PC-3 (cell line): ENCODE measurements at regions of chr1 and their contacts with region 1.

Region 1: GRCh38 chr1:6646499-6647148 is 22.0 kb downstream of the THAP3 start:
- DNase-seq: peak; percentile 68
- ATAC-seq: peak; percentile 53
- H3K4me3 ChIP-seq: no peak overlapping the region
- H3K27ac ChIP-seq: no peak overlapping the region
- H3K4me1 ChIP-seq: no peaks in the 10 kb centered on the region
- H3K27me3 ChIP-seq: no peaks in the 10 kb centered on the region
- CTCF ChIP-seq: peak; percentile 90

Region 2: GRCh38 chr1:6342056-6342455 is 304.6 kb before region 1 on chr1:
- CTCF ChIA-PET with region 1: no interaction called
- POLR2A ChIA-PET with region 1: no interaction called
- intact Hi-C with region 1: no loop called
- DNase-seq: no peak
- ATAC-seq: no peak
- H3K4me3 ChIP-seq: no peak overlapping the region
- H3K27ac ChIP-seq: peak overlapping the region; percentile 67
- H3K4me1 ChIP-seq: peaks cover 16% of the 10 kb centered on the region
- H3K27me3 ChIP-seq: no peaks in the 10 kb centered on the region
- CTCF ChIP-seq: no peak

Region 3: DNA sequence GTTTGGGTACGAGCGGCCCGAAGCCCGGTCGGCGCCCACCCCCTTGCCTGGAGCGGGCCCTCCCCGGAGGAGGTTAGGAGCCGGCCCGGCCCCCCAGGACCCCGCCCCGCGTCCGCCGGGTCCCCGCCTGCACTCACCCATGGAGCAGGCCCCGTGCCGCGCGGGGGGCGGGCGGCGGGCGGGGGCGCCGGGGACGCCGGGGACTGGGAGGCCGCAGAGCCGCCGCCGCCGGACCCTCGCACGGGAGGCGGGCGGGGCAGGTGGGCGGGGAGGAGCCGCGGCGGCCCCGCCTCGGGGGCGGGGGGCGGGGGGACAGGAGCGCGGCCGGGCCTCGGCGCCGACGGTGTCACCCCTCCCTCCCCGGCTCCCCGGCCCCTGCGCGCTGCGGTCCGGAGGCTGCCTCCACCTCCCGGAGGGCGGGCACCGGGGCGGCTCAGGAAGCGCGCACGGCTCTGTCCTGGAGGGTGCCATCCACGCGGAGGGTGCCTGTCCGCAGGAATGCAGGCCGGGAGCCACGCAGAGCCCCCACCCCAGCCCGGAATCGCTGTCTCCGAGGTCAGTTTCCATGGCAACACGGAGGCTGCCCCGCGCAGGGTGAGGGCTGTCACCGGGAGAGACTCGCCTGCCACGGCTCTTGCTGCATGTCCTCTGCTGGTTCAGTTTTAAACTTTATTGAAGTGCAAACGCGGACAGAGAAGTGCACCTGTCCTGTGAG is 149.3 kb before region 1 on chr1:
- CTCF ChIA-PET with region 1: no interaction called
- POLR2A ChIA-PET with region 1: no interaction called
- intact Hi-C with region 1: no loop called
- DNase-seq: peak; percentile 77
- ATAC-seq: peak; percentile 80
- H3K4me3 ChIP-seq: peak overlapping the region; percentile 89
- H3K27ac ChIP-seq: no peak overlapping the region
- H3K4me1 ChIP-seq: peaks cover 27% of the 10 kb centered on the region
- H3K27me3 ChIP-seq: no peaks in the 10 kb centered on the region
- CTCF ChIP-seq: no peak

Region 4: GRCh38 chr1:6554031-6554906 is 92.4 kb before region 1 on chr1 and contains the start of gene NOL9:
- CTCF ChIA-PET with region 1: no interaction called
- POLR2A ChIA-PET with region 1: no interaction called
- intact Hi-C with region 1: loop called (anchors 5 kb)
- DNase-seq: peak; percentile 98
- ATAC-seq: peak; percentile 96
- H3K4me3 ChIP-seq: peak within 1 kb of the TSS; percentile 89
- H3K27ac ChIP-seq: no peak within 1 kb of the TSS
- H3K4me1 ChIP-seq: peaks cover 12% of the 10 kb centered on the region
- H3K27me3 ChIP-seq: no peaks in the 10 kb centered on the region
- CTCF ChIP-seq: peak; percentile 97
- total RNA-seq, gene NOL9: 79.1 and 102 TPM in 2 replicates

Region 5: GRCh38 chr1:6579374-6580118 is 67.1 kb before region 1 on chr1 and contains the start of gene ZBTB48:
- CTCF ChIA-PET with region 1: no interaction called
- POLR2A ChIA-PET with region 1: no interaction called
- intact Hi-C with region 1: loop called (anchors 2 kb)
- DNase-seq: peak; percentile 100
- ATAC-seq: peak; percentile 96
- H3K4me3 ChIP-seq: peak within 1 kb of the TSS; percentile 92
- H3K27ac ChIP-seq: 0 out of 2 replicates have a peak within 1 kb of the TSS, but pooled peaks have one; percentile 11
- H3K4me1 ChIP-seq: peaks cover 27% of the 10 kb centered on the region
- H3K27me3 ChIP-seq: no peaks in the 10 kb centered on the region
- CTCF ChIP-seq: no peak
- total RNA-seq, gene ZBTB48: 42.7 and 47.2 TPM in 2 replicates

Region 6: DNA sequence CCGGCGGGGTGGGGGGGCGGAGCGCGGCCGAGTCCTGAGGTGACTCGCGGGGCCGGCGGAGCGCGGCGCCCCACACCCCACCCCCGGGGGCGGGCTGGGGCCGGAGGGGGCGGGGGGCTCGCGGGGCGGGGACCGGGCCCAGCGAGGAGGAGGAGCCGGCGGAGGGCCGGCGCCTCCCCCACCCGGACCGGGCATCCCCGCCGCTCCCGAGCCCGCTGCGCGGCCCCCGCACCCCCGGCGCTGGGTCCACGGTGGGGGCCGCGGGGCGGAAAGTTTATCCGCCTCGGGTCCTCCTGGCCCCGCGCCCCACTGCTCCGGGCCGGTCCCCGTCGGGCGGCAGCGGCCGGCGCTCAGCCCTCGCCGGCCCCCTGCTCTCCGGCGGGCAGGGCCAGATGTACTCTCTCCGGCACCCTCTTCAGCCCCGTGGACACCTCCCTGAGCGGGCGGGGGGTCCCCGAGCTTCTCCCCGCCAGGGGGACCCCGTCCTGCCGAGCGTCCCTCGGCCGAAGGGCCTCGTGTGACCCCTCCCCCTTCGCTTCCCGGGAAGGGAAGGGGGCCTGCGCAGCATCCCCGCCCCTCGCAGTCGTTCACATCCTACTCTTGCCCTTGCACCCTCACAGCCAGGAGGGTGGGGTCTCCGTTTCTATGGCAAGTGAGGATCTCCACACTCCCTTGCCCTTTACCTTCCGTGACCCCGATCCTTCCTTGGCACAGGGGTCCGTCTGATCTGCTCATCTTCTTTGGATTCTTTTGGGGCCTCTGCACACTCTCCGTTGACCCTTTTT is 139.3 kb after region 1 on chr1:
- CTCF ChIA-PET with region 1: no interaction called
- POLR2A ChIA-PET with region 1: no interaction called
- intact Hi-C with region 1: no loop called
- DNase-seq: peak; percentile 47
- ATAC-seq: no peak
- H3K4me3 ChIP-seq: peak overlapping the region; percentile 84
- H3K27ac ChIP-seq: no peak overlapping the region
- H3K4me1 ChIP-seq: peaks cover 21% of the 10 kb centered on the region; the same call in 1 of the 2 replicates
- H3K27me3 ChIP-seq: no peaks in the 10 kb centered on the region
- CTCF ChIP-seq: peak; percentile 21; the same call in 1 of the 2 replicates